Left ventricle myocardium inferior (tissue), 1 donor: ENCODE measurements at regions of chr6 and their contacts with region 1.

Region 1: GRCh38 chr6:15239616-15240364 is 6.1 kb upstream of the JARID2 start:
- DNase-seq: no peak
- H3K4me3 ChIP-seq: no peak overlapping the region
- H3K27ac ChIP-seq: peak overlapping the region; percentile 68
- H3K4me1 ChIP-seq: peaks cover 35% of the 10 kb centered on the region
- H3K27me3 ChIP-seq: no peaks in the 10 kb centered on the region
- CTCF ChIP-seq: no peak

Region 2: DNA sequence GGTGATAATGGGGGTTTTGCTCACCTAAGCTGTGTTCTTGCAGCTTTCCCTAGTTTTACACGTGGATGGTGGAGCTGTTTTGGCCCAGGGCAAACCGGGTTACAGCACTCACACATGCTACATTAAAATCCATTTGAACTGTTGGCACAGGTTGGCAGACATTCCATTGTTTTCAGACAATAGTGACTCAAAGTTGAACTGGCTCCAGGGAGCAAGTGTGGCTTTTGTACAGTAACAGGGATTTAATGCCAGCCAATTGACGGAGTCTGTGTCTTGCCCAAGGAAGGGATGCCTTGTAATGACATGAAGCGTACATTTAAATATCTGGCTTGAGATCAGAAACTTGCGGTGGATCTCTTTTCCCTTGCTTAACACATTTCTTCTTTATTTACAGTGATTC is 240.0 kb after region 1 on chr6:
- intact Hi-C with region 1: loop called (anchors 10 kb)
- DNase-seq: no peak
- H3K4me3 ChIP-seq: no peak overlapping the region
- H3K27ac ChIP-seq: peak overlapping the region; percentile 11
- H3K4me1 ChIP-seq: peaks cover 80% of the 10 kb centered on the region
- H3K27me3 ChIP-seq: no peaks in the 10 kb centered on the region
- CTCF ChIP-seq: no peak